Body of pancreas (tissue), 4 donors: ENCODE measurements at regions of chr7 and their contacts with region 1.

Region 1: GRCh38 chr7:32436146-32436928 is 53.8 kb downstream of the LSM5 start:
- DNase-seq: no peak
- ATAC-seq: no peak
- H3K4me3 ChIP-seq: no peak overlapping the region
- H3K27ac ChIP-seq: no peak overlapping the region
- H3K4me1 ChIP-seq: no peaks in the 10 kb centered on the region
- H3K27me3 ChIP-seq: no peaks in the 10 kb centered on the region
- CTCF ChIP-seq: no peak
- POLR2A ChIP-seq: no peak

Region 2: GRCh38 chr7:32378988-32379387 is 57.3 kb before region 1 on chr7:
- intact Hi-C with region 1: loop called (anchors 10 kb)
- DNase-seq: no peak
- ATAC-seq: no peak
- H3K4me3 ChIP-seq: no peak overlapping the region
- H3K27ac ChIP-seq: no peak overlapping the region
- H3K4me1 ChIP-seq: no peaks in the 10 kb centered on the region
- H3K27me3 ChIP-seq: no peaks in the 10 kb centered on the region
- CTCF ChIP-seq: no peak
- POLR2A ChIP-seq: no peak

Region 3: DNA sequence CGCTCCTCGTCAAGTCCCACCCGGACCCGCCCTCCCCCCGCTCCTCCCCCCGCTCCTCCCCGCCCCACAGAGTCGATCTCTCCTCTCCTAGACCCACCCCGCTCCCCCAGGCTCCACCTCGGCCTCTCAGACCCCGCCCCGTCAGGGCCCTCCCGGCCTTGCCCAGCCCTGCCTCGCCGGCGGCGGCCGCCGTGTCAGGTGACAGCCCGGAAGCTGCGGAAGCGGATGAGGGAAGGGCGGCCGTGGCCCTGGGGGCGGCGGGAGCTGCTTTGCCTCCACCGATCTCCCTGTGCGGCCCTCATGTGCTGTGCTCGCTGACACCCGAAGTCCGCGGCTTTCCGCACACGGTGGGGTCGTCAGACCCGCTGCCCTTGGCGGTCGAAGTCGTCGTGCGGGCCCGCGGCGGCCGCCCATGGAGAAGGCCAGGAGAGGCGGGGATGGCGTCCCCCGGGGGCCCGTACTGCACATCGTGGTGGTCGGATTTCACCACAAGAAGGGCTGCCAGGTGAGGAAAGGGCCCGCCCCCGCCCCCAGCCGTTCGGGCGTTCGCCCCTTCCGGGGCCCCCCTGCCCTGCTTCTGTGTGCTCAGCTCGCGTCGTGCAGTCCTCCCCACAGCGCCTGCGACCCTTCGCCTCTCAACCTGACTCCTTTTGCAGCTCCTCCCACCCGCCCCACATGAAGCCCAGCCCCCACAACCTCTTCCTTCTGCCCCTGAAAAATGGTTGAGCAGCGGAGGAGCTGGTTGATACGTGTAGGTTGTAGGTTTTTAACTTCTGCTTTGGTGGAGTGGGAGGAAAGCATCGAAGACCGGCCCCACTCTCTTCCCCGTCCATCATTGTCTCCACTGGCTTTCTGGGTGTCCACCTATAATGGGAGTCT is 59.2 kb after region 1 on chr7 and contains the start of gene AVL9:
- intact Hi-C with region 1: no loop called
- DNase-seq: peak; percentile 97 to 98 (median 98)
- ATAC-seq: peak; percentile 97
- H3K4me3 ChIP-seq: peak within 1 kb of the TSS; percentile 83 to 100
- H3K27ac ChIP-seq: peak within 1 kb of the TSS; percentile 76 to 97 (median 94)
- H3K4me1 ChIP-seq: peaks cover 28% of the 10 kb centered on the region
- H3K27me3 ChIP-seq: no peaks in the 10 kb centered on the region
- CTCF ChIP-seq: no peak
- POLR2A ChIP-seq: peak; percentile 72 to 91 (median 89)
- total RNA-seq, gene AVL9: 15.3 to 19.8 TPM

Region 4: GRCh38 chr7:32905175-32905662 is 468.9 kb after region 1 on chr7:
- intact Hi-C with region 1: no loop called
- DNase-seq: peak; percentile 21 to 60 (median 34)
- ATAC-seq: peak; percentile 79
- H3K4me3 ChIP-seq: no peak overlapping the region
- H3K27ac ChIP-seq: no peak overlapping the region
- H3K4me1 ChIP-seq: peaks cover 7% of the 10 kb centered on the region
- H3K27me3 ChIP-seq: no peaks in the 10 kb centered on the region
- CTCF ChIP-seq: peak in 1 of 7 experiments; percentile 20
- POLR2A ChIP-seq: no peak